Activated CD8-positive, alpha-beta T cell treated with anti-CD3 and anti-CD28 coated beads, Interleukin-2, amount 10 ng/mL, durations not matched to agents 7 days and 5 days (primary cell): ENCODE measurements at regions of chr14 and their contacts with region 1.

Region 1: DNA sequence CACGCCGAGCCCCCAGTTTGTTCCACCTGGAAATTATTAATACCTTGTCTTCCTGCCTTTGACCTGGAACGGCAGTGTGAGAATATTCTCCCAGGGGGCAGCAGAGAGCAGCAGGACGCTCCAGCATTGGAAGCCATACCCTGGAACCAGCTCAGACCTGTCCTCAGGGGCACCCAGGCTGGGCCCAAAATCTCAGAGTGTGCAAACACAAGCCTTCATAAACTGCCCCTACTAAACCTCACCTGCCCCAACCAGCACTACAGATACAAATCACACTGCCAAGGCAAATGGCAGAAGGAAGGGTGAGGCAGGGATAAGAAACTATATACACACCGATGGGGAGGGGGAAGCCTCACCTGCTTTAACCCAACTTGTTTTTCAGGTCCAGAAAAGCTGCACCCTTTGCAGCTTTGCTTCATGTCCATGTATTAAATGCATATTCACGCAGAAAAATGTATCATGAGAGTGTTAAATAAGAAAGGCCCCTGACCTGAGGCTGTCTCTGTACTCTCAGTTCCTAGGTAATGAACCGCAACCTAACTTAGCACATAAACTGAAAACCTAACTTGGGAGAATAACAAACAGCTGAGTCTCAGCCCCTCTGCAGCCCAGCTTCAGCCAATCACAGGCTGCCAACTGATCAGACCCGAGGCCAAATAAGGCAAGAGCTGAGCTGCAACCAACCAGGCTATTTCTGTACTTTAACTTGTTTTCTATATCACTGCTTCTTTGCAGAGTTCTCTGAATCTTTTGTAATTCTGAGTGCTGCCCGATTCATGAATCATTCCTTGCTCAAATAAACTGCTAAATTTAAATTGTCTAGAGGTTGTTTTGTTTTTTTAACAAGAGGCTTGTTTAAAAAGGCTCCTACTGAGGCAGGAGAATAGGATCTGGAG is 130.1 kb downstream of the SPTSSA start:
- DNase-seq: peak; percentile 69
- ATAC-seq: peak; percentile 90
- H3K4me3 Mint-ChIP-seq: no peak overlapping the region
- H3K27ac Mint-ChIP-seq: no peak overlapping the region
- H3K4me1 Mint-ChIP-seq: peaks cover 8% of the 10 kb centered on the region
- H3K27me3 Mint-ChIP-seq: no peaks in the 10 kb centered on the region

Region 2: DNA sequence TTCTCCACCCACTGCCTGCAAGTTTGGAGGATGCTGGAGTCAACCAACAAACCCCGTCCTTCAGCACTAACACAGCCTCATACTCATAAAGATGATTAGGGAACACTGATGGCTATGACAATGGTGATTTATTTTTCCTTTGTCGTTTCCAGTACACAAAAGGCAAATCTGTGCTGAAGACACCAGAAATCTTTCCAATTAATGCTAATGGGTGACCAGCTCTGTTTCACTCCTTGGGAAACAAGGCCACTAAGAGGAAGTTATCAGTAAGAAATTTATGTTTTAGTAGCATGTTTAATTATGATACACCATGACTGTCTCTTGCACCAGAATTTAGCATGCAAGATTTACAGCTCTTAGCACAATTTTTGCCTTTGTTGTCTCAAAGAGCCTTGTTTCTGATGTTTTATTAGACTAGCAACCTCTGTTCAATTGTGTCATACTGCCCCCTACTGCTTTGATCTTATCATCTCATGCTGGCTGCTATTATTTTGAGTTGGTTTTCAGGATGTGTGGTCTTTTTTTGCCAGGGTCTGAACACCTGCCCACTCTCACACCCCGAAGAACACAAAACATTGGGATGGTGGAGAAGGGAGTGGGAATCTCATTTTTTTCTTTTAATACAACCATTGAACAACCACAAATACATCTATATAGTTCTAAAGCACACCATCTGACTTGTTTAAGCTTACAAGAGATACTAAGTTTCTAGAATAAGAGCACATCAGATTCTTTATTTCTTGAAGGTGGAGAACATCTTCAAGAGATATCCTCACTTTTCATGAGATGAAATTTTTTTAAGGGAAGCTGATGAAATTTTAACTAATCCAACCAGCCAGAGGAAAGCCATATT is 30.9 kb before region 1 on chr14:
- CTCF ChIA-PET with region 1: interaction called, 11 read pairs
- POLR2A ChIA-PET with region 1: no interaction called
- DNase-seq: peak; percentile 28
- ATAC-seq: no peak
- H3K4me3 Mint-ChIP-seq: no peak overlapping the region
- H3K27ac Mint-ChIP-seq: no peak overlapping the region
- H3K4me1 Mint-ChIP-seq: no peaks in the 10 kb centered on the region
- H3K27me3 Mint-ChIP-seq: no peaks in the 10 kb centered on the region

Region 3: GRCh38 chr14:34498684-34499412 is 166.9 kb after region 1 on chr14:
- CTCF ChIA-PET with region 1: interaction called, 16 read pairs
- POLR2A ChIA-PET with region 1: no interaction called
- DNase-seq: peak; percentile 24
- ATAC-seq: peak; percentile 60
- H3K4me3 Mint-ChIP-seq: no peak overlapping the region
- H3K27ac Mint-ChIP-seq: no peak overlapping the region
- H3K4me1 Mint-ChIP-seq: no peaks in the 10 kb centered on the region
- H3K27me3 Mint-ChIP-seq: no peaks in the 10 kb centered on the region